ENCODE measurements at regions of chr3 and their contacts with region 1.

Region 1: DNA sequence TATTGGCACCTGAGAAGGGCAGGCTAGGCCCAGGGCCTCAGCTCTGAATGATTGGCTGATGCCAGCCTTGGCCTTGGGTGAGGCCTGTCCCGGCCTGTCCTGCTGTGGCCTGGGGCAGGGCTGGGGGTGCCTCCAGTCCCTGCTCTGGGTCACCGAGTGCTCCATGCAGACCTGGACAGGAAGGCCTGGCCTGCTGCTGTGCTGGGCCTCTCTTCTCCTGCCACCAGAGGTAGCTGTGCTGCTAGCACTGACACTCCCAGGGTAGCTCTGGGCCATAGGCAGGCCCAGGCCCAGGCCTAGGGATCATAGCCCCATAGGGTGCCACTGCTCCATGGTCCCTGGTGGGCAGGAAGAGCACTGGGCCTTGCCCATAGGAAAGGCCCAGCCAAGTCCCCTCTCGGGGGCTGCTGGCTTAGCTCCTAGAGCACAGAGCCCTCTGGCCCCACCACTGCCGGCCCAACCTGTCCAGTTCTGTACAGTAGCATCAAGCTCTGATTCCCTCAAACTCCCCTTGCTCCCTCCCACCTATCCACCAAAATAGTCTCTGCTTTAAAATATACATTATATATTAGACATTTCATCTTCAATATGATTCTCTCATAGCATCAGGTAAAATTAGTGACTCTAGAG is 18.2 kb downstream of the ABTB1 start:
- DNase-seq: peak; percentile 38 to 61
- ATAC-seq: peak in 1 of 4 donors; percentile 43
- H3K4me3 ChIP-seq: no peak overlapping the region
- H3K27ac ChIP-seq: peak overlapping the region; percentile 54
- H3K4me1 ChIP-seq: peaks cover 22% of the 10 kb centered on the region
- H3K27me3 ChIP-seq: no peaks in the 10 kb centered on the region
- CTCF ChIP-seq: peak; percentile 38

Region 2: DNA sequence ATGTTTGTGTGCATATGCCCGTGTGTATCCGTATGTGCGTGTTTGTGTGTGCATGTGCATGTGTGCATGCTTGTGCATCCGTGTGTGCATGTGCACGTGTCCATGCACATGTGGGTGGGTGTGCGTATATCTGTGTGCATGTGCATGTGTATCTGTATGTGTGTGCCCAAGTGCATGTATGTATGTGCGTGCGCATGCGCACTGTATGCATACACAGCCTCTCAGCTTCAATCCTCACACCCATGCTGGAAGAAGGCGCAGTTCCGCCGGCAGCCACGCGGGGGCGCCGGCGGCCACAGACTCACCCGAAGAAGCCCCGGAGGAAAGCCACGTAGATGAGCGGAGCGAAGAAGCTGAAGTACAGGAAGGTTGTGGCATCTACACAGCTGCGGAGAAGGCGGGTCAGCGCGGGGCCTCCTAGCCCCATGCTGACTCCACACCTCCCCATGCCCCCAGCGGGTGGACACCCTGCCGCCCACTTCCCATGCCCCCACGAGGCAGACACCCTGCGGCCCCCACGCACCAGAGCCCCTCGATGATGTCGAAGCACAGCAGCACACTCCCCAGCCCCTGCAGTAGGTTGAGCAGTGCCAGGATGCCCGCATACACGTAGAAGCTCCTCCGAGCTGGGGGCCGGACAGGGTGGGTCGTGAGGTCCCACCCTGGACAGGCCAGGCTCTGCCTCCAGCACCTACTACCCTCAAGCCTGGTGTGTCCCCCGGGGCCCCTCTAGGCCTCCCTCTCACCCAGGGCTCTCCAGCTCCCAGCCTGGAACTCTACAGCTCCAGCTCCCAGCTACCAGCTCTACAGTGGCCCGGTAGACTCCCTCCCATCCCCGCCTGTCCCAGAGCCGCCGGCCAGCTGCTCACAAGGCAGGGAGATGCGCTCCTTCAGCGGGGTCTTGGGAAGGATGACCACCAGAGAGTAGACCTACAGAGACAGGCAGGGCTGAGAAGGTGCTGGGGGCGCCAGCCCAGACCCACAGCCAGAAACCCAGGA is 115.8 kb before region 1 on chr3:
- intact Hi-C with region 1: loop called in 1 of 2 experiments (anchors 5 kb)
- DNase-seq: peak; percentile 83 to 91
- ATAC-seq: peak; percentile 87 to 97 (median 93)
- H3K4me3 ChIP-seq: no peak overlapping the region
- H3K27ac ChIP-seq: no peak overlapping the region
- H3K4me1 ChIP-seq: peaks cover 7% of the 10 kb centered on the region
- H3K27me3 ChIP-seq: no peaks in the 10 kb centered on the region
- CTCF ChIP-seq: peak; percentile 93

Region 3: GRCh38 chr3:127652231-127652995 is 38.5 kb before region 1 on chr3:
- intact Hi-C with region 1: loop called (anchors 2 to 5 kb)
- DNase-seq: peak; percentile 58 to 76
- ATAC-seq: peak; percentile 85 to 97 (median 90)
- H3K4me3 ChIP-seq: no peak overlapping the region
- H3K27ac ChIP-seq: no peak overlapping the region
- H3K4me1 ChIP-seq: no peaks in the 10 kb centered on the region
- H3K27me3 ChIP-seq: no peaks in the 10 kb centered on the region
- CTCF ChIP-seq: peak; percentile 93